Transverse colon (tissue), 4 donors: ENCODE measurements at regions of chr6 and their contacts with region 1.

Region 1: DNA sequence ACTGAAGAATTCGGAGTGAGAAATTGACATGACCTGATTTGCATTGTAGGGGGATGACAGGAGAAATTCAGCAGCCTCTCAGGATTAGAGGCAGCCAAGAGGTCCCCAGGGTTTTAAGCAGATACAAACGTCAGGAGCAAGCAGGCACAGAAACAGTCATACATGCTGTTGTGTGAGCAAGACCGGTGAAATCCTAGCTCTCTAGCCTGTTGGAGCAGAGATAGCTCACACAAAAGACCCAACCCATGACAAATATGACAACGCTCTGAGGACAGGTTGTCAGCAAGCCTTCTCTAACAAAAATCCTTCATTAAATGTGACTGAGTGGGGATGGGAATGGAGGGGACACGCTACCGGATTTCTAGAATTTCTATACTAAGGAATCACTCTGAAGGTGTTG is 23.0 kb upstream of the AKAP12 start:
- DNase-seq: no peak
- H3K4me3 ChIP-seq: no peak overlapping the region
- H3K27ac ChIP-seq: no peak overlapping the region
- H3K4me1 ChIP-seq: no peaks in the 10 kb centered on the region
- H3K27me3 ChIP-seq: no peaks in the 10 kb centered on the region
- CTCF ChIP-seq: no peak
- EP300 ChIP-seq: no peak
- POLR2A ChIP-seq: no peak

Region 2: GRCh38 chr6:151197556-151197955 is 19.2 kb before region 1 on chr6:
- in situ Hi-C with region 1: no loop called
- intact Hi-C with region 1: loop called (anchors 1 kb)
- DNase-seq: no peak
- H3K4me3 ChIP-seq: no peak overlapping the region
- H3K27ac ChIP-seq: no peak overlapping the region
- H3K4me1 ChIP-seq: peaks cover 0 to 3% (median 0%) of the 10 kb centered on the region in 4 donors
- H3K27me3 ChIP-seq: no peaks in the 10 kb centered on the region
- CTCF ChIP-seq: no peak
- EP300 ChIP-seq: no peak
- POLR2A ChIP-seq: no peak